HEK293 (cell line): ENCODE measurements at regions of chr17 and their contacts with region 1.

Region 1: GRCh38 chr17:38415250-38416194 is 12.7 kb upstream of the ARHGAP23 start:
- H3K4me3 ChIP-seq: peak overlapping the region; percentile 13
- H3K27ac ChIP-seq: peak overlapping the region; percentile 93
- H3K4me1 ChIP-seq: peaks cover 14% of the 10 kb centered on the region
- CTCF ChIP-seq: peak; percentile 14; the same call in 1 of the 2 replicates

Region 2: GRCh38 chr17:38322091-38322779 is 93.3 kb before region 1 on chr17:
- CTCF ChIA-PET with region 1: interaction called, 35 read pairs
- POLR2A ChIA-PET with region 1: interaction called, 3 read pairs
- H3K4me3 ChIP-seq: no peak overlapping the region
- H3K27ac ChIP-seq: no peak overlapping the region
- H3K4me1 ChIP-seq: peaks cover 4% of the 10 kb centered on the region
- CTCF ChIP-seq: no peak

Region 3: DNA sequence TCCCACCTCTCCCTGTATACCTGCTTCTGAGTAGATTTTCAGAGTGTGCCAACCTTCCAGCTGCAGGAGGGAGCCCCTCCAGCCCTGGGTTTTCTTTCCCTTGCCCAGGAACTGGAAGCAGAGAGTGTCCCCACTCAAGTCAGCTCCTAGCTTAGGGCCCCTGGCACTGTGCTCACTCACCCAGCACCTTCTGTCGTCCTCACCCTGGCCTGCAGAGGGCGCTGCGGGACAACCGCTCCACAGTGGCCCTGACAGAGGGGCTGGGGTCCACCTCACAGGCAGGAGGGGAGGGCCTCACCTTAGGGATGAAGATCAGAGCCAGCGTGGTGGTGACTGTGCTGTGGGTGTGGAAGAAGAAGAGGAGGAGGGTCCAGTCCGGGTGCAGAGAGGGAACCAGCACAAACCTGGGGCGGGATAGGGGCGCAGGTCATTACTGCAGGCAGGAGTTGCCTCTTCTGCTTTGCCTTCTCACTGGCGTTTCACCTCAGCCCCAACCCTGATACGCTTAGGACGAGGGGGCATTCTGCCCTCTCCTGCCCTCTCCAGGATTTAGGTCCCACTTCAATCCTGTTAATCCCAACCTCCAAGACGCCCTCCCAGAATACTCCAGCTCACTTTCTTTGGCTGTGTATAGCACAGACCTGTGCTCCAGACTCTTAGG is 81.8 kb before region 1 on chr17:
- CTCF ChIA-PET with region 1: interaction called, 67 read pairs
- POLR2A ChIA-PET with region 1: interaction called, 3 read pairs
- H3K4me3 ChIP-seq: no peak overlapping the region
- H3K27ac ChIP-seq: no peak overlapping the region
- H3K4me1 ChIP-seq: no peaks in the 10 kb centered on the region
- CTCF ChIP-seq: peak; percentile 83

Region 4: GRCh38 chr17:38341035-38341721 is 74.3 kb before region 1 on chr17:
- CTCF ChIA-PET with region 1: interaction called, 324 read pairs
- POLR2A ChIA-PET with region 1: interaction called, 5 read pairs
- H3K4me3 ChIP-seq: no peak overlapping the region
- H3K27ac ChIP-seq: peak overlapping the region; percentile 40; the same call in 1 of the 2 replicates
- H3K4me1 ChIP-seq: peaks cover 9% of the 10 kb centered on the region
- CTCF ChIP-seq: no peak

Region 5: DNA sequence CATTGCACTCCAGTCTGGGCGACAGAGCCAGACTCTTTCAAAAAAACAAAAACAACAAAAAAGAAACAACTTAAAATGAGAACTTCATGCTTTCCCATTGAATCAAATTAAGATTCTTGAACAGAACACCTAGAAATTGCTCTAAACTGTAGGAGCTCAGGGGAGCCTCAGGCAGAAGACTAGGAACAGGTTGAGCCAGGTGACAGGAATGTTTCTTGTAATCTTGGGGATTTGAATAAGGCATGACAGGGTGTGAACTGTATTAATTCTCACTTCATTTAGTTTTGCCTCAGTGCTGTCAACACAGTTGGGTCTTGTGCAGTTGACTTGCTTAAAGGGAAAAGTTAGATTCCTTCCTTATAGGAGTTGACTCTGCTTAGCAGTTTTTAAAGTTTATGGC is 36.1 kb before region 1 on chr17:
- CTCF ChIA-PET with region 1: interaction called, 14 read pairs
- POLR2A ChIA-PET with region 1: no interaction called
- H3K4me3 ChIP-seq: no peak overlapping the region
- H3K27ac ChIP-seq: no peak overlapping the region
- H3K4me1 ChIP-seq: no peaks in the 10 kb centered on the region
- CTCF ChIP-seq: no peak

Region 6: DNA sequence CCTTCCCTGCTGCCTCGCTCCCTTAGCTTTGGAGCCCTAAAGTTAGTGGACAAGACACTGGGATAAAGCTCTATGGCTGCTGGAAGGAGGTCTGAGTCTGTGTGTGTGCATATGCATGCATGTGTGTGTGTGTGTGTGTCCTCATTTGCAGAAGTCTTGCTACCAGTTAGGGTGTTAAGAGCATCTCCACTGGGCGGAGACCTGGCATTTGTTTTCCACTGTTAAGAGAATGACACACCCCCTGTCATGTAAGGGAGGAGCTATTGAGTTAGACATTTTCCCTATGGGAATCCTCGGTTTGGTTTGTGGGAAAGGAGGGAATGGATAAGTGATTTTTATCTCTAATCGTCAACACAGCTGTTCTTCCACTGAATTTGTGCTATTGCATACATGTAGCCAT is 12.0 kb before region 1 on chr17:
- CTCF ChIA-PET with region 1: interaction called, 29 read pairs
- POLR2A ChIA-PET with region 1: interaction called, 4 read pairs
- H3K4me3 ChIP-seq: no peak overlapping the region
- H3K27ac ChIP-seq: no peak overlapping the region
- H3K4me1 ChIP-seq: peaks cover 7% of the 10 kb centered on the region; the same call in 1 of the 2 replicates
- CTCF ChIP-seq: no peak

Region 7: DNA sequence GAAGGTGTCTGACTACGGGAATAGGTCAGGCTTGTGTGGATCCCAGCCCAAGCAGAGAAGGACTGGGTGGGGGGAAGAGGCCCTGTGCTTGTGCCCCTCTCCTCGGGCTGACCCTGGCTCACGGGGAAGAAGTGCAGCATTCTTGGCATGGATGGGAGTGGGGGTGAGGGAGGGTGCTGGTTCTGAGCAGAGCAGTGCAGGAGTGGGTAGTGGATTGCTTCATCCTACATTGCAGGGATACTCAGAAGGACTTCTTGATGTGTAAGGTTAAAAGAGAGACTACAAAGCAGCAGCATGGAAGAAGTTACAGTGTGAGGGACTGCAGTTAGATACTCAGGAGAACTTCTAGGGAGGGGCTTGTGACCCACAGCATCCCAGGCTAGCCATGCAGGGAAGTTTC is 14.8 kb after region 1 on chr17:
- CTCF ChIA-PET with region 1: interaction called, 12 read pairs
- POLR2A ChIA-PET with region 1: interaction called, 4 read pairs
- H3K4me3 ChIP-seq: no peak overlapping the region
- H3K27ac ChIP-seq: no peak overlapping the region
- H3K4me1 ChIP-seq: peaks cover 3% of the 10 kb centered on the region
- CTCF ChIP-seq: no peak

Region 8: GRCh38 chr17:38498186-38498752 is 82.7 kb after region 1 on chr17:
- CTCF ChIA-PET with region 1: no interaction called
- POLR2A ChIA-PET with region 1: no interaction called
- H3K4me3 ChIP-seq: no peak overlapping the region
- H3K27ac ChIP-seq: no peak overlapping the region
- H3K4me1 ChIP-seq: no peaks in the 10 kb centered on the region
- CTCF ChIP-seq: no peak

Region 9: GRCh38 chr17:38550661-38551060 is 135.1 kb after region 1 on chr17:
- CTCF ChIA-PET with region 1: no interaction called
- POLR2A ChIA-PET with region 1: no interaction called
- H3K4me3 ChIP-seq: no peak overlapping the region
- H3K27ac ChIP-seq: no peak overlapping the region
- H3K4me1 ChIP-seq: no peaks in the 10 kb centered on the region
- CTCF ChIP-seq: no peak

Region 10: DNA sequence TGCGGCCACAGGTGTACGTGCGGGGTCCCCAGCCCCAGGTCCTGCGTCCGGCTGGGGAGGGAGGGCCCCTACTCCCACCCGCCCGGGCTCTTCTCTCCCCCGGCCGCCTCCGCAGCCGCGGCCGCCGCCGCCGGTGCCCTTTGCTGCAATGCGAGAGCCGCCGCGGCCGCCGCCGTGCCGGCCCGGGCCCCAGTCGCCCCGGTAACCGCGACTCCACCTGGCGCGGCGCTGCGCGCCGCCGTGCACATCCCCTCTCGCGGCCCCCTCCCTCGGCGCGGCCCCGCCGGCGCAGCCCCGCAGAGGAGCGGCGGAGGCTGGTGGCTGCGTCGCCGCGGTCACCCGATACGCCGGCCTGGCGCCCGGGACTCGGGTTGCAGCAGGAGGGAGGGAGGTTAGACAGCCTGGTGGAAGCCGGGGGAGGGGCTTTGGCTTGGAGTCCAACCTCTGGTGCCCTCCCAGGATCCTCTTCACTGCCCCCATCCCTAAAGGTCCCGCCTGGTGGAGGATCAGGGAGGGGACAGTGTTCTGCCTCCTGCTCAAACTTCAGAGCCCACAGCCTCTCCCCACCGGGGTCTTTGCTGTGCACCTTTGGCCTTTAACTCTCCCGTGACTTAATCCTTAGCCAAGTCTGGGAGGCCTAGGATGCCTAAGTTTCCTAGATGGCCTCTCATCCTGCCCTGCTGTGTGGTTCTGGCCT is 157.3 kb after region 1 on chr17:
- CTCF ChIA-PET with region 1: no interaction called
- POLR2A ChIA-PET with region 1: no interaction called
- H3K4me3 ChIP-seq: peak overlapping the region; percentile 37
- H3K27ac ChIP-seq: no peak overlapping the region
- H3K4me1 ChIP-seq: peaks cover 7% of the 10 kb centered on the region; the same call in 1 of the 2 replicates
- CTCF ChIP-seq: no peak